Activated CD8-positive, alpha-beta T cell treated with anti-CD3 and anti-CD28 coated beads for 36 hours (primary cell): ENCODE measurements at regions of chr7 and their contacts with region 1.

Region 1: DNA sequence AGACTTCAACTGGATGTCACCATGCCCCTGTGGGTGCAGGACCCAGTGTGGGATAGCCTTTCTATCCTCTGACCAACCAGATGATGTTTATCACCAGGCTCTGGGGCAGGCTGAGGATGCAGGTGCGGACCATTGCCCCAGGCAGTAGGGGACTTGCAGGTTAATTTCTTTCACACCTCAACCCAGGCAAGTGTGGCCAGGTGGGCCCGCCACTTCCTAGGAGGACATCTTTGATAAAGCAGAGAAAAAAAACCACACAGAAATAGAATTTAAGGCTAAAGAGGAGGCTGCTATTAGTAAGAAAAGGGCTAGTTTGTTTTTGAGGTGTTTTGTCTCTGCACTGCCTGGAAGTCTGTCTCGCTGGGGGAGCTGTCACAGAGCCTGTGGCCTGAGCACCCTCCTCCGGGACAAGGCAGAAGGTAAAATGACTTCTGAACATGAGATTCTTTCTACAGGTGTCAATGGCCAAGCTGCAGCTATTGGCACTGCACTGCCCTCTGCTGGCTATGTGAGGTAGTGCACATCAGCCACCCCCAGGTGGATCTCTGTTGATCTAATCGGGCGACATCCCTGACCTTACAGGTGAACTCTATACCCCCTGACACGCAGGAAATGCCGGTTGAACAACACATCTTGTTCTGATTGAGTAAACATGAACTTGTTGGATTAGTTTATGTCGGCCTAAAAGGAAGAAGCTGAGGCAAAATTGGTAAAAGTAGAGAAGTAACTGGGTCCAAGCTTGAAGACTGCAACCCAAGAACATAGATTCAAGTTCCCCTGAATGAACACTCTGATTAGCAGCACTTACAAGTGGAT is 21.0 kb downstream of the UPP1 start:
- DNase-seq: peak; percentile 94
- ATAC-seq: peak; percentile 92
- H3K4me3 Mint-ChIP-seq: no peak overlapping the region
- H3K27ac Mint-ChIP-seq: peak overlapping the region; percentile 50
- H3K4me1 Mint-ChIP-seq: peaks cover 11% of the 10 kb centered on the region
- H3K27me3 Mint-ChIP-seq: no peaks in the 10 kb centered on the region
- CTCF ChIP-seq: peak; percentile 96

Region 2: DNA sequence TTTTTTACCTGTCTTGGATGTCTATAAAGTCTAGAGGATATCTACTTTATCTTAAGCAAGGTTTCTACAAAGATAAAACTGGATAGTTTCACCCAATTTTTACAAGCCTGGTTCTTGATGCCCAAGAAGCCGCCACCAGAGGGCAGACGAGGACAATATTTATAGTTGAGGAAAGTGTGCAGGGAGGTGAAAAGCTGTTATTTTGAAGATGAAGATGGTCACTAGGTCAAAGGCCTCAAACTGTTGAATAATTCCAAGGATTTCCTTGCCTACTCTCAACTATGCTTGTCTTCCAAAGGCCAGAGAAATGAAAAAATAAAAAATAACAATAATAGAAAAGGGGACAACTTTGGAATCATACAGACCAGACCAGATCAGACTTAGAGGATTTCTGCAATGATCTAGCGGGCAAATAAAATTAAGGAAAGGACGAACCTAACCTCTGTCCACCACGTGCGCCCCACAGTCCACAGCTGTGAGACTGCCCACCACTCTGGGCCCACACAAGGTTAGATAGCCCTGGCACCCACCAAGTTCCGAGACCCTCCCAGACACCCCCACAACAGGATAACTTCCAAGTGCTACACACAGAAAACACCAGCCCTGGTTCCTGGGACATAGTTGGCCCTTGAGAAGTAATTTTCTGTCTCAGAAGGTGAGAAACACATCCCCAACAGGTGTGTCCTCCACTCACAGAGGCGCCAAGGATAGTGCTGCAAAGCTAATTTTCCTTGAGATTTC is 164.6 kb before region 1 on chr7:
- CTCF ChIA-PET with region 1: interaction called, 56 read pairs
- POLR2A ChIA-PET with region 1: interaction called, 3 read pairs
- intact Hi-C with region 1: loop called (anchors 2 kb)
- DNase-seq: peak; percentile 92
- ATAC-seq: peak; percentile 61
- H3K4me3 Mint-ChIP-seq: no peak overlapping the region
- H3K27ac Mint-ChIP-seq: no peak overlapping the region
- H3K4me1 Mint-ChIP-seq: no peaks in the 10 kb centered on the region
- H3K27me3 Mint-ChIP-seq: no peaks in the 10 kb centered on the region
- CTCF ChIP-seq: peak; percentile 76

Region 3: GRCh38 chr7:47979145-47979831 is 130.8 kb before region 1 on chr7 and contains the start of gene HUS1:
- CTCF ChIA-PET with region 1: interaction called, 18 read pairs
- POLR2A ChIA-PET with region 1: interaction called, 8 read pairs
- intact Hi-C with region 1: no loop called
- DNase-seq: peak; percentile 94
- ATAC-seq: peak; percentile 98
- H3K4me3 Mint-ChIP-seq: peak within 1 kb of the TSS; percentile 85
- H3K27ac Mint-ChIP-seq: peak within 1 kb of the TSS; percentile 97
- H3K4me1 Mint-ChIP-seq: peaks cover 26% of the 10 kb centered on the region
- H3K27me3 Mint-ChIP-seq: no peaks in the 10 kb centered on the region
- CTCF ChIP-seq: no peak
- total RNA-seq, gene HUS1: 37.1 to 43.5 TPM

Region 4: GRCh38 chr7:47999418-47999817 is 110.6 kb before region 1 on chr7:
- CTCF ChIA-PET with region 1: interaction called, 10 read pairs
- POLR2A ChIA-PET with region 1: no interaction called
- intact Hi-C with region 1: no loop called
- DNase-seq: no peak
- ATAC-seq: no peak
- H3K4me3 Mint-ChIP-seq: no peak overlapping the region
- H3K27ac Mint-ChIP-seq: no peak overlapping the region
- H3K4me1 Mint-ChIP-seq: no peaks in the 10 kb centered on the region
- H3K27me3 Mint-ChIP-seq: no peaks in the 10 kb centered on the region
- CTCF ChIP-seq: no peak

Region 5: DNA sequence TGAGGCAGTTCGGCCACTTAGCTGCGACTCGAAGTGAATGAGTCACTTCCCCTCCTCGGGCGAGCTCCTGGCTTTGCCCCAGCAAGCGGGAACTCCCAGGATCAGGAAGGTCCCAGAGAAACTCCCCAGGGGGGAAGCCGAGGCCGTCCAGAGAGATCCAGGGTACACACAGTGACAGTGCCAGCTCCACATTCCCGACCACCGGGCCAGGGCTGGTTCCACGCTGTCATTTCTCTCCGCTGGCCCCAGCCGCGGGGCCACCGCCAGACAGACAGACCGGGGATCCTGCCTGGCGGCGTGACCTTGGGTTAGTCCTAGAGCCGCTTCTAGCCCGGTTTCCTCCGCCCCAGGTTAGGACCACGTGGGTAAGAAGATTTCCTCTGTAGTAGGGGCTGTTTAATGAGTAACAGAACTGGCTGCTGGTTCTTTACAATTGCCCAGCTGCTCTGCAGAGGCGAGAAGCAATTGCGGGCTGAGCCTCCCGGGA is 21.5 kb before region 1 on chr7:
- CTCF ChIA-PET with region 1: interaction called, 13 read pairs
- POLR2A ChIA-PET with region 1: interaction called, 4 read pairs
- intact Hi-C with region 1: no loop called
- DNase-seq: peak; percentile 95
- ATAC-seq: peak; percentile 74
- H3K4me3 Mint-ChIP-seq: peak overlapping the region; percentile 81
- H3K27ac Mint-ChIP-seq: peak overlapping the region; percentile 89
- H3K4me1 Mint-ChIP-seq: peaks cover 64% of the 10 kb centered on the region
- H3K27me3 Mint-ChIP-seq: no peaks in the 10 kb centered on the region
- CTCF ChIP-seq: no peak